ENCODE measurements at regions of chr1 and their contacts with region 1.

Region 1: DNA sequence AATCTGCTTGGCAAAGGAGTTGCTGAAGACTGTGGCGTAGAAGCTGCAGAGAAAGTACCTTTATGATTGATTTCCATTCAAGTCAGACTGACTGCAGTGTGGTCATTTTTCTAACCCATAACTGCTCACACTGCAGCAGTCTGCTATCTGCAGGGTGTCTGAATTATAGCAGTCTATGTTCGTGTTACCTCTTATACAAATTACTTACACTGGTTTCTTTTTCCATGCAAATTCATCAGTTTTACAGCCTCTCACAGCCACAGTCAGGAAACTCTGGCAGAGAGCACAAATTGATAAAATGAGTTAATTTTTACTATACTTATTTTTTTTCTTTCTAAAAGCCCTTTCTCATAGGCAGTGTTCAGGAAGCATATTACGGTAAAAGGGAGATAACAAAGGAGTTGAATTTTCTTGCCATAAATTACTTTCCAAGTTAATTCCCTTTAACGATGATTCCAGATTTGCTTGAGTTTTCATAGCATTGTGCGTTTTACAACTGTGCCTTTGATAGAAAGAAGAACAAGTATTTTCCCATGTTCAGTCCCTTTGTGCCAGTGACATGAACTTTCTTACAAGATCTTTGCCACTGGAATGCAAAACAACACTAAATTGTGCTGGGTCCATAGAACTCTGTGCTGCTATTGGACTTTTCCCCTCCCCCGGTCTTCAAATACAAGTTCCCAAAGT is 261.5 kb downstream of the NFIA start:
- DNase-seq: no peak
- H3K4me3 ChIP-seq: no peak overlapping the region
- H3K27ac ChIP-seq: no peak overlapping the region
- H3K4me1 ChIP-seq: peaks cover 2% of the 10 kb centered on the region
- H3K27me3 ChIP-seq: no peaks in the 10 kb centered on the region
- CTCF ChIP-seq: no peak
- POLR2A ChIP-seq: no peak

Region 2: DNA sequence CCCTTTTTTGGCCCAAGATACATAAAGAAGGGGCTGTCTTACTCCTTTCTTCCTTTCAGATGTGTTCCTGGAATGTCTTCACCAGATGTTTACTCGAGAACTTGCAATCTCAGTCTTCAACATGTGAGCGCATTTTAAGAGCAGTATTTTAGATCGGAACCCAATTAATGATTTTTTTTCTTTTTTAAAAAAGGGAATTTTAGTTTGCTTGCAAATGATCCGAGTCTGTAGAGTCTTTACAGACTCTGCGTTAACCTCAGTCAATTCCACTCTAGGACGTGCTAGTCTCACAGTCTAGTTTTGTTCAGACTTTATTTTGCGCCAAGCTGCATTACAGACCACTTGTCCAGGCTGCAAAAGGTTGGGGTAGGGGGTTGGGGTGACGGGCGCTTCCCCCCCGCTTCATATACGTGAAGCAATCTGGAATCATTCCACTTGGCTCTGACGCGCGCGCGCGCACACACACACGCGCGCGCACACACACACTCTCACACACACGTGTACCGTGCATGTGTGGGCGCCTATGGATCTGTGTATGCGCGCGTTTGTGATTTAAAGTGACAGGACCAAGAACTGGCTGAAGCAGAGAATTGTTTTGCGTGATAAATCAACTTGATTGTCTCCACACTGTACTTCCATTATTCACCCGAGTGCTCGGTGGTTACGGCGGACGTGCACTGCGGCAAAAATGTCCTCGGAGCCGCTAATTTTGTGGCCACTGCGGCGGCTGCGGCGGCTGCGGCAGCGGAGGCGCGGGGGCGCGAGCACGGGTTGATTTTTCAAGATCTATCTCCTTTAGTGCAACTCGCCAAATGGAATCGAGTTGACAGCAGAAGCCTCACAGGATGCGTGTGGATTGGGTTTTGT is 287.1 kb before region 1 on chr1:
- intact Hi-C with region 1: no loop called
- DNase-seq: peak; percentile 76
- H3K4me3 ChIP-seq: peak overlapping the region; percentile 69 to 79
- H3K27ac ChIP-seq: peak overlapping the region; percentile 71 to 96
- H3K4me1 ChIP-seq: peaks cover 42% of the 10 kb centered on the region
- H3K27me3 ChIP-seq: no peaks in the 10 kb centered on the region
- CTCF ChIP-seq: no peak
- POLR2A ChIP-seq: no peak

Region 3: GRCh38 chr1:61087571-61087970 is 256.3 kb before region 1 on chr1:
- intact Hi-C with region 1: no loop called
- DNase-seq: peak; percentile 58
- H3K4me3 ChIP-seq: no peak overlapping the region
- H3K27ac ChIP-seq: peak overlapping the region; percentile 51 to 97
- H3K4me1 ChIP-seq: peaks cover 23% of the 10 kb centered on the region
- H3K27me3 ChIP-seq: no peaks in the 10 kb centered on the region
- CTCF ChIP-seq: no peak
- POLR2A ChIP-seq: no peak

Region 4: GRCh38 chr1:61102041-61102440 is 241.8 kb before region 1 on chr1:
- intact Hi-C with region 1: no loop called
- DNase-seq: no peak
- H3K4me3 ChIP-seq: no peak overlapping the region
- H3K27ac ChIP-seq: peak overlapping the region in 1 of 2 donors; percentile 36
- H3K4me1 ChIP-seq: peaks cover 35% of the 10 kb centered on the region
- H3K27me3 ChIP-seq: no peaks in the 10 kb centered on the region
- CTCF ChIP-seq: no peak
- POLR2A ChIP-seq: no peak

Region 5: GRCh38 chr1:61453111-61453961 is 109.5 kb after region 1 on chr1:
- intact Hi-C with region 1: loop called (anchors 10 kb)
- DNase-seq: peak; percentile 95
- H3K4me3 ChIP-seq: no peak overlapping the region
- H3K27ac ChIP-seq: peak overlapping the region; percentile 64 to 75
- H3K4me1 ChIP-seq: peaks cover 43% of the 10 kb centered on the region
- H3K27me3 ChIP-seq: no peaks in the 10 kb centered on the region
- CTCF ChIP-seq: peak; percentile 58 to 71 (median 67)
- POLR2A ChIP-seq: no peak